Activated CD4-positive, alpha-beta memory T cell treated with anti-CD3 and anti-CD28 coated beads for 36 hours (primary cell): ENCODE measurements at regions of chr12 and their contacts with region 1.

Region 1: DNA sequence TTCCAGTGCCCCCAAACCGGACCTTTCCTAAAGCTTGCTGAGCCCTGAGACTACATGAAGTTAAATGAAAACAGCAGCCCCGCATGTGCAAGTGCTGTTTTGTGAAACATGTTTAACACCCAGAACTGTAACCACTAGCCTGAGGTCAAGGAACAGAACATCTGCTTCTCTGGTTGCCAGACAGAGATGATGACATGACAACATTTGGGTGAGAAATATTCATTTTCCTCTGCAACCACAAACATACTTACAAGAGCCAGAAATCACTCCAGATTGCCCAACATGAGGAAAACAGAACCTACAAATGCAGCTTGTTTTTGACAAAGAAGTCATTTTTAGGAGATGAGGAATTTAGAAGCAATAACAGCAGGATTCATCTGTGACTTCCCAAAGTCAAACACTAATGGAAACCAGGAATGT is 110.4 kb downstream of the BCAT1 start:
- DNase-seq: peak; percentile 57
- H3K4me3 Mint-ChIP-seq: peak overlapping the region; percentile 20
- H3K27ac Mint-ChIP-seq: peak overlapping the region; percentile 85
- H3K4me1 Mint-ChIP-seq: peaks cover 44% of the 10 kb centered on the region
- H3K27me3 Mint-ChIP-seq: peaks cover 5% of the 10 kb centered on the region

Region 2: GRCh38 chr12:24561882-24562760 is 276.4 kb before region 1 on chr12:
- CTCF ChIA-PET with region 1: no interaction called
- POLR2A ChIA-PET with region 1: no interaction called
- intact Hi-C with region 1: loop called (anchors 5 kb)
- DNase-seq: peak; percentile 31
- H3K4me3 Mint-ChIP-seq: peak overlapping the region; percentile 72
- H3K27ac Mint-ChIP-seq: no peak overlapping the region
- H3K4me1 Mint-ChIP-seq: peaks cover 19% of the 10 kb centered on the region
- H3K27me3 Mint-ChIP-seq: peaks cover 56% of the 10 kb centered on the region

Region 3: DNA sequence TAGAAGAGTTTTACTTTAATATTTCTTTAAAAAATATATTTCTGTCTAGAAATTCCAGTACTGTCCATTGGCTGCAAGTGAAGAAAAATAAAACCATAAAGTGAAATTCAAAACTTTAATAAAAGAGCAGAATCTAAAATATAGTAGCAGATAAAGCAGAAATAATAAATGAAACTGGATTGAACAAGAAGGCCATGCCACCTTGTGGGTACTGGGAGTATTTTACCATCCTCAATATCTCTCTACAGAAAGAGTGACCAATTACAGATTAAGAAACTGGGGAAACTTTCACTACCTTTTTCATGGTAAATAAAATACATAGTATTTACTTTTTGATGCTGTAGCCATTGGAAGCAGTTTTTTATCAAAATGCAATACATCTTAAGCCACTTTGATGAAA is 110.2 kb before region 1 on chr12:
- CTCF ChIA-PET with region 1: no interaction called
- POLR2A ChIA-PET with region 1: interaction called, 11 read pairs
- intact Hi-C with region 1: loop called (anchors 1 kb)
- DNase-seq: no peak
- H3K4me3 Mint-ChIP-seq: no peak overlapping the region
- H3K27ac Mint-ChIP-seq: peak overlapping the region; percentile 38
- H3K4me1 Mint-ChIP-seq: peaks cover 54% of the 10 kb centered on the region
- H3K27me3 Mint-ChIP-seq: no peaks in the 10 kb centered on the region

Region 4: DNA sequence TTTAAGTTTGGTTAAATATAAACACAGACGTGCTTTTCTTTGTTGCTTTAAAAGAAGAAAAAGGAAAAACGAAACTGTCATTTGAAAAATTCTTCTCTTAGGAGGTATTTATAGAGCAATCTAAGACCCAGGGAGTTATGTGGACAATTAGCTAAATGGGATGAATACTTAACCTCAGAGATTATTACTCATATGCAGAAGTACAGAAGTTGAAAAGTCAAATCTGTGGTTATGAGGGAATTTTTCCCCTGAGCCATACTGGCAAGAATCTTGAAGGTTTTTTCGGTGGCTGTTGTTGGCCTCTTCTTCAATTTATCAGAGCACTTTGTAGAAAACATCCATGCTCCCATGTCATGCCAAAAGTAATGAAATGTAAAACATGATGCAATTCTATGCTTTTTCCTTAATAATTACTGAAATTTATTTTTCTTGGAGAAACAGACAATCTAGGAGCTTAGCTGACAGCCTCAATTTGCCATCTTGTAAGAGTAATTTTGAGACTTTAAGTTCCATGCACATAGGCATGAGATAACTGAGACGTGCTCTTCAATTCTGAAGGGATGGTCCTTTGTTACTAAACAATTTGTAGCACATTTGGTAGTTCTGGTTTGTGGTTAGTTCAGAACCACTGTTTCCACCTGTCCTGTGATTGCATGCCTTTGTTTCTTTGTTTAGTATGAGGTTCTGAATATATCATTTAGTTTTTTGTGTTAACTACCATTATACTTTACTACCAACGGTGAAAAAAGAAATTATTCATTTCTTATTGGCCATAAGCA is 16.2 kb before region 1 on chr12:
- CTCF ChIA-PET with region 1: interaction called, 4 read pairs
- POLR2A ChIA-PET with region 1: interaction called, 11 read pairs
- intact Hi-C with region 1: loop called (anchors 1 kb)
- DNase-seq: no peak
- H3K4me3 Mint-ChIP-seq: no peak overlapping the region
- H3K27ac Mint-ChIP-seq: peak overlapping the region; percentile 50
- H3K4me1 Mint-ChIP-seq: peaks cover 30% of the 10 kb centered on the region
- H3K27me3 Mint-ChIP-seq: no peaks in the 10 kb centered on the region

Region 5: DNA sequence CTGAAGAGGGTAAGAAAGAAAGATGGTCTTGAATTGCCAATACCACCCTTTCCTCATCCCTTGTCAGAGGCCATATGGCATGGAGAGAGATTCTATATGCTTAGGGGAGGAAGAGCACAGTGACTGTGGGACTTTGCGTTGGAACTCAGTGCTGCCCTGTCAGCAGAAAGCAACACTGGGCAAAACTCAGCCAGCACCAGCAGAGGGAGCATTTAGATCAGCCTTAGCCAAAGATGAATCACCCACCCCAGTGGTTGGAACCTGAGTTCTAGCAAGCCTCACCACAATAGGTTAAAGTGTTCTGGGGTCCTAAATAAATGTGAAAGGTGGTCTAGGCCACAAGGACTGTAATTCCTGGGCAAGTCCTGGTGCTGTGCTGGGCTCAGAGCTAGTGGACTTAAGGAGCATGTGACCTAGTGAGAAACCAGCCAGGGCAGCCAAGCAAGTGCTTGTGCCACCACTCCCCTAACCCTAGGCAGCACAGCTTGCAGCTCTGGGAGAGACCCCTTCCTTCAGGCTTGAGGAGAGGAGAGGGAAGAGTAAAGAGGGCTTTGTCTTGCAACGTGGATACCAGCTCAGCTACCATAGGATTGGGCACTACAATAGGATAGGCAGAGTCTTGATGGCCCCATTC is 121.8 kb after region 1 on chr12:
- CTCF ChIA-PET with region 1: no interaction called
- POLR2A ChIA-PET with region 1: interaction called, 4 read pairs
- intact Hi-C with region 1: loop called (anchors 1 kb)
- DNase-seq: peak; percentile 71
- H3K4me3 Mint-ChIP-seq: no peak overlapping the region
- H3K27ac Mint-ChIP-seq: no peak overlapping the region
- H3K4me1 Mint-ChIP-seq: peaks cover 14% of the 10 kb centered on the region
- H3K27me3 Mint-ChIP-seq: peaks cover 10% of the 10 kb centered on the region

Region 6: GRCh38 chr12:25364529-25365339 is 526.2 kb after region 1 on chr12:
- CTCF ChIA-PET with region 1: no interaction called
- POLR2A ChIA-PET with region 1: no interaction called
- intact Hi-C with region 1: loop called (anchors 5 kb)
- DNase-seq: peak; percentile 83
- H3K4me3 Mint-ChIP-seq: peak overlapping the region; percentile 16
- H3K27ac Mint-ChIP-seq: peak overlapping the region; percentile 2
- H3K4me1 Mint-ChIP-seq: peaks cover 16% of the 10 kb centered on the region
- H3K27me3 Mint-ChIP-seq: peaks cover 10% of the 10 kb centered on the region